Activated CD8-positive, alpha-beta T cell treated with anti-CD3 and anti-CD28 coated beads, Interleukin-2, amount 10 ng/mL, durations not matched to agents 7 days and 5 days (primary cell): ENCODE measurements at regions of chr4 and their contacts with region 1.

Region 1: DNA sequence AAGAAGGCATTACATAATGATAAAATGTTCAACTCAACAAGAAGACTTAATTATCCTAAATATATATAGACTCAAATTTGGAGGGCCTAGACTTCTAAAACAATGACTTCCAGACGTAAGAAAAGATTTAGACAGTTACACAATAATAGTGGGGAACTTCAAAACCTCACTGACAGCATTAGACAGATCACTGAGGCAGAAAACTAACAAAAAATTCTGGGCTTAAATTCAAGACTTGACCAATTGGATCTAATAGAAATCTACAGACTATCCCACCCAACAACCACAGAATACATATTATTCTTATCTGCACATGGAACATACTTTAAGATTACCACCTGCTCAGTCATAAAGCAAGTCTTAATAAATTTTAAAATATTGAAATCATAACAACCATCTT is 93.3 kb upstream of the ARSJ start:
- DNase-seq: no peak
- ATAC-seq: no peak
- H3K4me3 Mint-ChIP-seq: no peak overlapping the region
- H3K27ac Mint-ChIP-seq: no peak overlapping the region
- H3K4me1 Mint-ChIP-seq: no peaks in the 10 kb centered on the region
- H3K27me3 Mint-ChIP-seq: peaks cover 10% of the 10 kb centered on the region

Region 2: DNA sequence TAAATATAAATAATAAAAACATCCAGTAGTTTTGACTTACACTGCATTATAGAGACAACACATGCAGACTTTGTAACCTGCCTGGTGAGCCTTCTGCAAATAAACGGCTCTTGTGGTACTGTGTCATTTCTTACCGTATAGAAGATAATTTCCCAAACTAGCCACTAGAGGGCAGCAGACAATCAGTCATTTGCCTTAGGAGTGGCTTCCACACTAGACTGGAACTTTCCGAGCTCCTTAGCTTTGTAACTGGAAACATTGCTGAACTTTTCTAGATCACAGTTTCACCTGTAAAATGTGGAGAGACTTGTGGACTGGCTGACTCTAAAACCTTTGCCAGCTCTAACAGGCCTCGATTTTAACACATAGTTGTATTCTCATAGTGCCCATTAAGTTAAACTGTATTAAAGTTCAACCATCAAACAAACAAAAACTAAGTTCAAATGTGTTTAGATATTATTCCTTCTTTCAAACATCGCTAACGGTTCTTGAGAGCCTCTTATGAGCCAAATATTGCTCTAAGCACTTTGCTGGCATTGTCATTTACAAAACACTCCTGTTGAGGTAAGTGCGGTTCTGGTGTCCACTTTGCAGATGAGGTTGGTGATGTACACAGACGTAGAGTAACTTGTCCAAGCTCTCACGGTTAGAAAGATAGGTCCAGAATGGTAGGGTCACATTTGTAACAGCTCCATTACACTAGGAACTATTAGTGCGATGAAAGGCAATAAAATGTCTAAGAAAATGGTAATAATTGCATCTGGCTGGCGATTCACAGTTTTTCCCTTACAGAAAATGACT is 677.9 kb before region 1 on chr4:
- CTCF ChIA-PET with region 1: interaction called, 27 read pairs
- POLR2A ChIA-PET with region 1: no interaction called
- DNase-seq: peak; percentile 75
- ATAC-seq: peak; percentile 89
- H3K4me3 Mint-ChIP-seq: no peak overlapping the region
- H3K27ac Mint-ChIP-seq: no peak overlapping the region
- H3K4me1 Mint-ChIP-seq: peaks cover 2% of the 10 kb centered on the region
- H3K27me3 Mint-ChIP-seq: peaks cover 2% of the 10 kb centered on the region

Region 3: GRCh38 chr4:113952452-113953029 is 120.2 kb before region 1 on chr4:
- CTCF ChIA-PET with region 1: interaction called, 11 read pairs
- POLR2A ChIA-PET with region 1: no interaction called
- DNase-seq: peak; percentile 45
- ATAC-seq: peak; percentile 83
- H3K4me3 Mint-ChIP-seq: no peak overlapping the region
- H3K27ac Mint-ChIP-seq: no peak overlapping the region
- H3K4me1 Mint-ChIP-seq: no peaks in the 10 kb centered on the region
- H3K27me3 Mint-ChIP-seq: peaks cover 1% of the 10 kb centered on the region